ENCODE measurements at regions of chr17 and their contacts with region 1.

Region 1: GRCh38 chr17:44199553-44200477 is at the start of gene ATXN7L3:
- DNase-seq: peak; percentile 97
- H3K4me3 ChIP-seq: peak within 1 kb of the TSS; percentile 85 to 98 (median 89)
- H3K27ac ChIP-seq: peak within 1 kb of the TSS; percentile 96 to 100 (median 99)
- H3K4me1 ChIP-seq: peaks cover 31 to 55% (median 33%) of the 10 kb centered on the region in 3 donors
- H3K27me3 ChIP-seq: no peaks in the 10 kb centered on the region
- CTCF ChIP-seq: no peak
- POLR2A ChIP-seq: peak in 1 of 4 donors; percentile 39
- total RNA-seq, gene ATXN7L3: 37.7 to 47.3 (median 44.0) TPM

Region 2: GRCh38 chr17:44503147-44504029 is 303.6 kb after region 1 on chr17 and contains the start of gene GPATCH8:
- intact Hi-C with region 1: loop called (anchors 10 kb)
- DNase-seq: peak; percentile 66
- H3K4me3 ChIP-seq: peak within 1 kb of the TSS; percentile 63 to 99 (median 86)
- H3K27ac ChIP-seq: peak within 1 kb of the TSS; percentile 89 to 96 (median 93)
- H3K4me1 ChIP-seq: peaks cover 13 to 50% (median 24%) of the 10 kb centered on the region in 3 donors
- H3K27me3 ChIP-seq: peaks cover 0 to 9% (median 0%) of the 10 kb centered on the region in 4 donors
- CTCF ChIP-seq: no peak
- POLR2A ChIP-seq: peak in 3 of 4 donors; percentile 31 to 72 (median 59)
- total RNA-seq, gene GPATCH8: 15.3 to 35.5 (median 24.9) TPM

Measured in esophagus squamous epithelium (tissue), 5 donors.